Activated CD4-positive, alpha-beta memory T cell treated with anti-CD3 and anti-CD28 coated beads for 36 hours (primary cell): ENCODE measurements at regions of chr4 and their contacts with region 1.

Region 1: GRCh38 chr4:99710681-99711345 is 53.2 kb upstream of the C4orf54 start:
- DNase-seq: no peak
- H3K4me3 Mint-ChIP-seq: no peak overlapping the region
- H3K27ac Mint-ChIP-seq: no peak overlapping the region
- H3K4me1 Mint-ChIP-seq: peaks cover 8% of the 10 kb centered on the region
- H3K27me3 Mint-ChIP-seq: peaks cover 4% of the 10 kb centered on the region

Region 2: GRCh38 chr4:99763635-99764101 is 52.9 kb after region 1 on chr4:
- CTCF ChIA-PET with region 1: no interaction called
- POLR2A ChIA-PET with region 1: no interaction called
- intact Hi-C with region 1: loop called (anchors 1 kb)
- DNase-seq: peak; percentile 38
- H3K4me3 Mint-ChIP-seq: no peak overlapping the region
- H3K27ac Mint-ChIP-seq: no peak overlapping the region
- H3K4me1 Mint-ChIP-seq: peaks cover 24% of the 10 kb centered on the region
- H3K27me3 Mint-ChIP-seq: peaks cover 12% of the 10 kb centered on the region